Colonic mucosa (tissue), 4 donors: ENCODE measurements at regions of chr1 and their contacts with region 1.

Region 1: GRCh38 chr1:94532077-94532476 is 9.5 kb downstream of the F3 start:
- DNase-seq: no peak
- H3K4me3 ChIP-seq: no peak overlapping the region
- H3K27ac ChIP-seq: no peak overlapping the region
- H3K4me1 ChIP-seq: no peaks in the 10 kb centered on the region
- H3K27me3 ChIP-seq: no peaks in the 10 kb centered on the region
- CTCF ChIP-seq: no peak

Region 2: DNA sequence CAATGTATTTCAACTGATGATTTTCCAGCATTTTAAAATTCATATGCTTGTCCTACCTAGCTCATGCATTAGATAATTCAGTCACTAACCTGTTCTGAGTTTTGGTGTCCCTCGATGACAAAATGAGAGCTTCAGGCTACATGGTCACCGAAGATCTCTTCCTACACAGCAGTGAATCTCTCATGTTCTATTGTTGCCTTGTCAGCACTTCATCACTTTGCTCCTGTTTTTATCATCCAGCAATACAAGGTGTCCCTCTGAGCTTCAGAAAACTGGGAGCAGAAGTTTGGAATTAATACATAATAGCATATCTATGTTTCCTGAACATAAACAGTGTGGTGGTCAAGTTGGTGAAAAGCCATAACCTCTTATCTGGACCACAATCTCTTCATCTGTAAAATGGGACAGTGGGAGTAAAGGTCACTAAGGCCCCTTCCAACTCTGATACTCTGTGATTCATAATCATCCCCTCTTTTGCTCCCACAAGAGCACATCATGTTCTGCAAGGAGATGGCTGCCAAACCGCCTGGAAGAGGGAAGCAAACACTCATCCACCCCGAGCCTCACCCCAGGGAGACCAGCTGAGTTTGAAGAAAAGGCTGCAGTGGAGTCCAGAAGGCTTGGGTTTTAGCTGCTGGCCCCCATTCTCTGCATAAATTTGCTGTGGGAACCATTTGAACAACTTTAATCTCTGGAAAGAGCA is 147.4 kb after region 1 on chr1:
- intact Hi-C with region 1: loop called (anchors 10 kb)
- DNase-seq: no peak
- H3K4me3 ChIP-seq: no peak overlapping the region
- H3K27ac ChIP-seq: no peak overlapping the region
- H3K4me1 ChIP-seq: peaks cover 10% of the 10 kb centered on the region
- H3K27me3 ChIP-seq: no peaks in the 10 kb centered on the region
- CTCF ChIP-seq: no peak